Spleen (tissue), 13 donors: ENCODE measurements at regions of chr1 and their contacts with region 1.

Region 1: GRCh38 chr1:13662493-13662892 is 37.5 kb upstream of the PRDM2 start:
- DNase-seq: no peak
- H3K4me3 ChIP-seq: no peak overlapping the region
- H3K27ac ChIP-seq: no peak overlapping the region
- H3K4me1 ChIP-seq: peaks cover 0 to 42% (median 12%) of the 10 kb centered on the region in 6 donors
- H3K27me3 ChIP-seq: peaks cover 0 to 28% (median 0%) of the 10 kb centered on the region in 7 donors
- CTCF ChIP-seq: no peak
- POLR2A ChIP-seq: no peak

Region 2: DNA sequence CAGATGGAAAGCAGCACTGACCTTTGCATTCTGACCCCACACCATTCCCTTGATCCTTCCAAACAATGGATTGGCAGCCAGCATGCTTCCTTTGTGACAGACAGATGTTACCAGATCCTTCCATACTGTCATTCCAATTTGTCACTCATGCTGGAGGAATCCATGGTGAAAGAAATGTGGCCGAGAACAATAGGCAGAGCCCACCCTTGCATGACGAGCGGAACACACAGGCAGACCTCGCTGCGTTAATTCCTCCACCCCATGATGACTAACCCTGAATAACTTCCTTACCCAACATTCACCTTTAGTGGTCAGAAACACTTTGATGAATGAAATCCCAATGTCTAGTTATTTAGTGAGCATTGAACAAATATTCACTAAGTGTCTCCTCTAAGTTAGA is 33.8 kb before region 1 on chr1:
- intact Hi-C with region 1: no loop called
- DNase-seq: no peak
- H3K4me3 ChIP-seq: no peak overlapping the region
- H3K27ac ChIP-seq: no peak overlapping the region
- H3K4me1 ChIP-seq: no peaks in the 10 kb centered on the region
- H3K27me3 ChIP-seq: peaks cover 0 to 21% (median 0%) of the 10 kb centered on the region in 7 donors
- CTCF ChIP-seq: no peak
- POLR2A ChIP-seq: no peak

Region 3: DNA sequence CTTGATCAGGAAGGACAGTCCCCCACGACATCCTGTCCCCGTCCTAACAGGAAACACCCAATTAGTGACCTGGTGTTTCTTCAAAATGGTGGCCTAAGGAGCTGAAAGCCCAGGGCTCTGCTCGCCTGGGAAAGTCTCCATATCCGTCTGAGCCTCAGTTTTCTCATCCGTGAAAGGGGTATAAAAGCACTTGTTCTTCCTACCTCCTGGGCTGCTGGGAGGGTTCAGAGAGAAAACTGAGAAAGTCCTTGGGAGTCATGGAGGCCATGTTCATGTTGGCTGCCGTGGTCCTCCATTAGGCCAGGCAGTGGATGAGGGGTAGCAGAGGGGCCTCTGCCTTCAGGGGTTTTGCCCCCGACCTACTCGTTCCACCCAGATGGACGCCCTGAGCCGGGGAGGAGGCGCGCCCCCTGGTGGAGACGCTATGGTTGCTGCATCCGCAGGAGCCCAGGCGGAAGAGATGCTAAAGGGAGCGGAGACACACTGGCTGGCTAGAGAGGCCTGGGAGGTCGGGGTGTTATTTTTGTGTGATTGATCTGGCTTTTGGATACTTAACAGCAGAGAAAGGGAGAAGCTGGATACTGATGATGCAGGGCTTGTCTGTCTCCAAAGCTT is 151.0 kb after region 1 on chr1:
- intact Hi-C with region 1: loop called (anchors 5 kb)
- DNase-seq: peak; percentile 87
- H3K4me3 ChIP-seq: no peak overlapping the region
- H3K27ac ChIP-seq: no peak overlapping the region
- H3K4me1 ChIP-seq: peaks cover 0 to 13% (median 5%) of the 10 kb centered on the region in 6 donors
- H3K27me3 ChIP-seq: peaks cover 0 to 21% (median 0%) of the 10 kb centered on the region in 7 donors
- CTCF ChIP-seq: peak; percentile 15 to 77 (median 60)
- POLR2A ChIP-seq: no peak

Region 4: GRCh38 chr1:13960375-13960987 is 298.0 kb after region 1 on chr1:
- intact Hi-C with region 1: loop called (anchors 2 kb)
- DNase-seq: peak; percentile 83
- H3K4me3 ChIP-seq: no peak overlapping the region
- H3K27ac ChIP-seq: no peak overlapping the region
- H3K4me1 ChIP-seq: no peaks in the 10 kb centered on the region
- H3K27me3 ChIP-seq: peaks cover 0 to 82% (median 5%) of the 10 kb centered on the region in 7 donors
- CTCF ChIP-seq: peak; percentile 89 to 96 (median 95)
- POLR2A ChIP-seq: no peak